ENCODE measurements at regions of chr7 and their contacts with region 1.

Region 1: GRCh38 chr7:151123822-151124464 is 37.7 kb downstream of the AGAP3 start:
- DNase-seq: peak; percentile 81 to 88
- ATAC-seq: peak; percentile 65 to 87 (median 76)
- H3K4me3 ChIP-seq: no peak overlapping the region
- H3K27ac ChIP-seq: no peak overlapping the region
- H3K4me1 ChIP-seq: peaks cover 3 to 28% (median 15%) of the 10 kb centered on the region in 9 donors
- H3K27me3 ChIP-seq: no peaks in the 10 kb centered on the region
- CTCF ChIP-seq: peak; percentile 91 to 99 (median 98)

Region 2: DNA sequence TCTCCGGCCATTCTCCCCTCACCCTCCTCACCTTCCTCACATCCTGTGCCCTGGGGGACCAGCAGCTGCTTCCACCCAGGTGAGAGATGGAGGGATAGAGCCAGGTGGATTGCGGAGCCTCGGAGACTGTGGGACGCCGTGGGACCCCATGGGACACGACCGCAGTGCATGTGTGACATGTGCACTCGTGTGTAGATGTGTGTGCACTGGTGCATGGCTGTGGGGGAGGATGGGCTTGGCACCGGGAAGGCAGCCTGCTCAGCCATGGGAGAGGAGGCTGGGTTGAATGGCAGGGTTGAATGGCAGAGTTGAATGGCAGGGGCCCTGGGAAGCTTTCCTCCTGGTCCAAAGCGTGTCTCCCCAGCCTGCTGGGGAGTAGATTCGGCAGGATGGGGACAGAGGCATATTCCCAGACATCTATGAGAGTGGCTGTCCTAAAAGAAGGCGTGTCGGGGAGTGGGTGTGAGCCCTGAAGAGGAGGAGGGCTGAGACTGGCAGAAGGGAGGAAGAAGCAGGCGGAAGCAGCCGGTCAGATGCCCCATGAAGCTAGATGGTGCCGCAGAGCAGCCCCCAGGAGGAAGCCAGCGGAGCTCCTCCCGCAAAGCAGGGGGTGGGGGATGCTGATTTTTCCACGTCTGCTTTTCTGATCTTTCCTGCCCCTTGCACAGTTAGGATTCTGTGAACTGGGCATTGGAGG is 672.7 kb before region 1 on chr7:
- intact Hi-C with region 1: no loop called
- DNase-seq: peak; percentile 57
- ATAC-seq: peak; percentile 35 to 70 (median 63)
- H3K4me3 ChIP-seq: peak overlapping the region; percentile 45 to 69 (median 65)
- H3K27ac ChIP-seq: peak overlapping the region; percentile 76 to 95 (median 88)
- H3K4me1 ChIP-seq: peaks cover 0 to 60% (median 34%) of the 10 kb centered on the region in 9 donors
- H3K27me3 ChIP-seq: no peaks in the 10 kb centered on the region
- CTCF ChIP-seq: peak in 1 of 9 donors; percentile 17

Region 3: DNA sequence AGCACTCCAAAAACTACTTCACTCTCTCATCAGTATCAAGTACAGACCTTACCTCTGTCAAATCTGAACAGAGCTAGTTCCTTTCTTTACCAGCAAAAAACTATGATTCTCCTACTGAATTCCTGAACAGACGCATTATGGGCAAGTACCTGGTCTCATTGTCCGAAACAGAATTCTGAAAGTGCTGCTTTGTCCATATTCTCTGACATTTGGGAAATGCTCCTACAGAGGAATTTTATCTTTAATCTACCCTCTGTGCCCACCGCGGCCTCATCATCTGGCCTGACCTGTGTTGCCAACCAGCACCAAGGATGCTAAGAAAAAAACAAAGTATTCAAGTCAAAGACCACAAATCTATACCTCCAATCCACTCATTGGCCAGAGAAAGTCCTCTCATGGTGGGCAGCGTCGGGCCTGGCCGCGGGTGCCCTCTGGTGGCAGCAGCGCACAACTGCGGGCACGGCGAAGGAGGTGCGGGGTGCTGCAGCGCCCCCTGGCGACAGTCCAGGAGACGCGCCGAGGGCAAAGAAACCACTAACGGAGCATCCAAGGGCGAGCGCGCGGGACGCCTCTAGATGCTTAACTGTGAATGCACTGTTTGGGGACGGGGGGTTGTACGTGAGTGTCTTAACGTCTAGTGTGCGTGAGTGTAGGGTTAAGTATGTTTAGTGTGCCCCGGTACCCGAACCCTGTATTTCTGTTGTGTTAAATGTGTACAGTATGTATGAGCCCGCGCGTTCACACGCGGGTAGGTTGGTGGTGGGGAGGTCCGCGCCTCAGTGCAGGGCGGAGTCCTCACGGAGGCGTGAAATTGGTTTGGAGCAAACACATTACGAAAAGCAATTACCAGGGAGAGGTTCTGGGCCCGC is 48.6 kb after region 1 on chr7:
- intact Hi-C with region 1: loop called (anchors 1 to 5 kb)
- DNase-seq: peak; percentile 62 to 82
- ATAC-seq: peak; percentile 59 to 79 (median 71)
- H3K4me3 ChIP-seq: no peak overlapping the region
- H3K27ac ChIP-seq: no peak overlapping the region
- H3K4me1 ChIP-seq: peaks cover 0 to 21% (median 4%) of the 10 kb centered on the region in 9 donors
- H3K27me3 ChIP-seq: peaks cover 4 to 78% (median 47%) of the 10 kb centered on the region in 7 donors
- CTCF ChIP-seq: peak; percentile 100

Region 4: DNA sequence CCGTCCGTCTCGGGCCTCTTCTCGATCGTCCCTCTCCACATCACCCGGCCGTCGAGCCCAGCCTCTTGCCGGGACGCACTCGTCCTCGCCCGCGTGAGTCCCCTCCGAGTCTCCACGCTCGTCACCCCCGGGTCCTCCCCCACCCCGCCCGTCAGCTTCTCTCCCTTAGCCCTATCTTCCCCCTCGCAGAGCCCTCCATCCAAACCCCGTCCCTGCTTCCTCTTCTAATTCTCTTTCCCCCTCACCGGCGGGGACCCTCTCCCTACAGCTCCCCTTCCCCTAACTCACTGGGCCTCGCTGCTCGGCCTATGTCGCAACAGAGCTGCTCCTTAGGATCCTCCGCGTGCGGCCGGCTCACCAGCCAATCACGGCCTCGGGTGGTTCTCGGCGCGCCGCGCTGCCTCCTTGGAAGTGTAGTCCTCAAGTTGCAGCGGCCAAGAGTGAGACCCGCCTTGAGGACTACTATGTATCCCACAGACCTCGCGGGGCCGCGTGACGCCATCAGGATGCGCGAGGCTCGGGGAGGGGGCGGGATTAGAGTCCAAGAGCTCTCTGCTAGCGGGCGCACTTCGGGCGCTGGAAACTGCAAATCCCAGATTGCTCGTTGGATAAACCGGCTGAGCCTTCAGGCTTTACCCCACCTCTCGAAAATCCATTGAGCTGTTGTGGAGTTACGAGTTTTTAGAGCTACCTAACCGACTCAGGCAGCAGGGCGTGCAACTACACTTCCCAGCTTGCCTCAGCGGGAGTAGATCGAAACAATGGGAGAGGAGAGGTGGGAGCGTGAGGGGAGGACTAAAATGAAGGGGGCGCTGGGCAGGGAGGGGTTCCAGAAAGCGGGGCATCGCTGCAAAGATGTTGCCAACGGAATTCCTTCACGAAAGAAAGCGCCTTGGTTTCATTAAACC is 103.2 kb after region 1 on chr7 and contains the start of gene ABCF2:
- intact Hi-C with region 1: loop called in 2 of 10 experiments (anchors 5 kb)
- DNase-seq: peak; percentile 99
- ATAC-seq: peak; percentile 99 to 100 (median 99)
- H3K4me3 ChIP-seq: peak within 1 kb of the TSS; percentile 65 to 94 (median 88)
- H3K27ac ChIP-seq: peak within 1 kb of the TSS in 9 of 10 donors; percentile 70 to 91 (median 81)
- H3K4me1 ChIP-seq: peaks cover 9 to 37% (median 27%) of the 10 kb centered on the region in 9 donors
- H3K27me3 ChIP-seq: no peaks in the 10 kb centered on the region
- CTCF ChIP-seq: peak in 1 of 9 donors; percentile 7
- total RNA-seq, gene ABCF2: 25.2 to 33.8 (median 29.5) TPM

Region 5: DNA sequence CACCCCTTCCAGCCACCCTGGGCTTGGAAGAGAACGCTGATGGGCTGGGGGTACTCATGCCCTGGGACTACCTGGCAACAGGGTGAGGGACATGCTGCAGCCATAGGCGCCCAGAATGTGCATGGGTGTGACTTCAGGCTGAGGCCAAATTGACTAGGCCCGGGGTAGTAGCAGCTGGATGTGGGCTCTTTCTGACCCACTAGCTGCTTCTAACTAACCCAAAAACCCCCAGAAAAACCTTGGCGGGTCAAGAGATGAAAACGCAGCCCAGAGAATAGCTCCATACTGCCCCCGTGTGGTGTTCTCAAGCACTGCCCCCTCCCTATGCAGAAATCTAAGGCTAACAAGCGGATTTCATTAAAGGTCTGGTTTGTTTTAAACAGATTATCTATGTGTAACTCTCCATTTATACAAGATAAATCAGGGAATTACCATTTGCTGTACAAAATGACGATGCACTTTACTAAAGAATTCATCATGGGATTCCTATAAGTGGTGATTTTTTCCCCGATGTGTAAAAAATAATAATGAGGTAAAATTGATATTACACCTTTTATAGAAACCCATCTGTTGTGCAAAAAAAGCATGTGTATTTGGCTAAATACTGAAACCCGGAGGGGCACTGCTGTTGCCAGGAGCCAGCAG is 120.4 kb after region 1 on chr7:
- intact Hi-C with region 1: loop called in 8 of 10 experiments (anchors 2 to 10 kb)
- DNase-seq: no peak
- ATAC-seq: no peak
- H3K4me3 ChIP-seq: peak overlapping the region in 1 of 10 donors; percentile 38
- H3K27ac ChIP-seq: peak overlapping the region in 1 of 10 donors; percentile 35
- H3K4me1 ChIP-seq: peaks cover 16 to 79% (median 61%) of the 10 kb centered on the region in 9 donors
- H3K27me3 ChIP-seq: peaks cover 0 to 47% (median 6%) of the 10 kb centered on the region in 7 donors
- CTCF ChIP-seq: peak; percentile 68 to 90 (median 86)

Region 6: DNA sequence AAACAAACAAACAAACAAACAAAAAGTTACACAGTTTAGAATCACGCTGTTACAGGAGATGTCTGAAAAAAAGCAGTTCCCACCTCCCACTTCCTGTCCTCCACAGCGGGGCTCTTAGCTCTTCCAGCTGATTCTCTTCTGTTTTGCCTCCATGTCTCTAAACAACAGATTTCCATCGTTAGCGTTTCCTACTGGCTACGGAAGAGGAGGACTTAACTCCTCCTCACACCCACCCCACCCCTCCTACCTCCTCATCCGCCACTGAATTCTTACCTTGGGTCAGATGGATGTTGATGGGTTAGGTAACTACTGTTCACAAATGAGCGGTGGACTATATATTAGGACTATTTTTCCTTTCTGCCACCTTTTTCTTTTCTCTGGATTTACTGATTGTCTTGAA is 180.9 kb after region 1 on chr7:
- intact Hi-C with region 1: loop called (anchors 1 to 10 kb)
- DNase-seq: no peak
- ATAC-seq: no peak
- H3K4me3 ChIP-seq: peak overlapping the region in 2 of 10 donors; percentile 7 to 31
- H3K27ac ChIP-seq: no peak overlapping the region
- H3K4me1 ChIP-seq: peaks cover 3 to 17% (median 11%) of the 10 kb centered on the region in 9 donors
- H3K27me3 ChIP-seq: peaks cover 0 to 61% (median 39%) of the 10 kb centered on the region in 7 donors
- CTCF ChIP-seq: no peak

Region 7: GRCh38 chr7:151793531-151793951 is 669.6 kb after region 1 on chr7:
- intact Hi-C with region 1: no loop called
- DNase-seq: peak in 1 of 2 donors; percentile 57
- ATAC-seq: peak; percentile 8 to 64 (median 33)
- H3K4me3 ChIP-seq: no peak overlapping the region
- H3K27ac ChIP-seq: peak overlapping the region in 4 of 10 donors; percentile 9 to 76 (median 48)
- H3K4me1 ChIP-seq: peaks cover 0 to 65% (median 10%) of the 10 kb centered on the region in 9 donors
- H3K27me3 ChIP-seq: no peaks in the 10 kb centered on the region
- CTCF ChIP-seq: no peak